Mammary epithelial cell (primary cell): ENCODE measurements at regions of chr7 and their contacts with region 1.

Region 1: GRCh38 chr7:134750083-134751062 is 29.1 kb upstream of the CALD1 start:
- DNase-seq: peak; percentile 20
- H3K4me3 ChIP-seq: no peak overlapping the region
- H3K27ac ChIP-seq: no peak overlapping the region
- H3K4me1 ChIP-seq: peaks cover 17% of the 10 kb centered on the region
- H3K27me3 ChIP-seq: no peaks in the 10 kb centered on the region
- CTCF ChIP-seq: peak; percentile 69 to 77

Region 2: GRCh38 chr7:134293002-134293740 is 457.2 kb before region 1 on chr7:
- CTCF ChIA-PET with region 1: no interaction called
- dilution Hi-C with region 1: no loop called
- in situ Hi-C with region 1: no loop called
- intact Hi-C with region 1: no loop called
- DNase-seq: no peak
- H3K4me3 ChIP-seq: no peak overlapping the region
- H3K27ac ChIP-seq: no peak overlapping the region
- H3K4me1 ChIP-seq: peaks cover 12% of the 10 kb centered on the region
- H3K27me3 ChIP-seq: no peaks in the 10 kb centered on the region
- CTCF ChIP-seq: no peak

Region 3: GRCh38 chr7:134714470-134715205 is 35.7 kb before region 1 on chr7:
- CTCF ChIA-PET with region 1: no interaction called
- dilution Hi-C with region 1: loop called (anchors 5 kb)
- in situ Hi-C with region 1: no loop called
- intact Hi-C with region 1: no loop called
- DNase-seq: no peak
- H3K4me3 ChIP-seq: no peak overlapping the region
- H3K27ac ChIP-seq: no peak overlapping the region
- H3K4me1 ChIP-seq: peaks cover 13% of the 10 kb centered on the region
- H3K27me3 ChIP-seq: no peaks in the 10 kb centered on the region
- CTCF ChIP-seq: no peak

Region 4: GRCh38 chr7:135129580-135129979 is 379.2 kb after region 1 on chr7:
- CTCF ChIA-PET with region 1: no interaction called
- dilution Hi-C with region 1: no loop called
- in situ Hi-C with region 1: no loop called
- intact Hi-C with region 1: no loop called
- DNase-seq: no peak
- H3K4me3 ChIP-seq: no peak overlapping the region
- H3K27ac ChIP-seq: no peak overlapping the region
- H3K4me1 ChIP-seq: no peaks in the 10 kb centered on the region
- H3K27me3 ChIP-seq: peaks cover 2% of the 10 kb centered on the region
- CTCF ChIP-seq: no peak